Dendritic cell treated with granulocyte-macrophage colony-stimulating factor and Interleukin-4, amounts not matched to agents 40 ng/mL and 50 ng/mL, for 4 days (primary cell): ENCODE measurements at regions of chr2 and their contacts with region 1.

Region 1: DNA sequence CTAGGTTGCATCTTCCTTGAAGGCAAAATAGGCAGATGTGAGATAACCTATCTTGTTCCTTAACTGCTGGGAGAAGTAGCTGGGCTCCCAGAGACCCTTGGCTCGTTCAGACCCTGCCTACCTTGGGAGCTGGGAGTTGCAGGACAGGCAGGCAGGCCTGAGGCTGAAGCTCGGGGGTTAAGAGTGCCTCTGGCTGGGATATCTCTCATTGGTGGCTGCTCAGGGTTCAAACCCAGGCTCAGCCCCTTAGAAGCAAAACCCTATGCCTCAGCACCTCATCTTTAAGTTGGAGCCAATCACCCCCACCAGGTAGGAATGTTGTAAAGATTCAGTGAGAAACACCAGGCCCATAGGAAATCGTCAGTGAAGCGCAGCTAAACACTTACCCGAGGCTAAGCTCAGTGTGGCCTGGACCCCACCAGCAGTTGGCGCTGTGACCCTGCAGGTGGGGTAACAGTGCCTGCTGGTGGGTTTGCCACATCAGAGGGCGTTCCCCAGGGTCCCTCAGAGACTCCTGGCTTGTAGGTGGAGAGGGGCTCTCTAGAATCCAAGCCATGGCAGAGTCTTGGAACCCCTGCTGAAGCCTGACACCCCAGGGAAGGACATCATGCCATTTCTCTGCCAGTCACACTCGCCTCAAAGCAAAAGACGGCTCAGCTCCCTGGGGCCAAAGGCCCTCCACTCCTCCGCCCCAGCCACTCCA is 54.6 kb upstream of the GPR17 start:
- H3K4me3 Mint-ChIP-seq: no peak overlapping the region
- H3K27ac Mint-ChIP-seq: no peak overlapping the region
- H3K4me1 Mint-ChIP-seq: peaks cover 6% of the 10 kb centered on the region
- H3K27me3 Mint-ChIP-seq: no peaks in the 10 kb centered on the region

Region 2: DNA sequence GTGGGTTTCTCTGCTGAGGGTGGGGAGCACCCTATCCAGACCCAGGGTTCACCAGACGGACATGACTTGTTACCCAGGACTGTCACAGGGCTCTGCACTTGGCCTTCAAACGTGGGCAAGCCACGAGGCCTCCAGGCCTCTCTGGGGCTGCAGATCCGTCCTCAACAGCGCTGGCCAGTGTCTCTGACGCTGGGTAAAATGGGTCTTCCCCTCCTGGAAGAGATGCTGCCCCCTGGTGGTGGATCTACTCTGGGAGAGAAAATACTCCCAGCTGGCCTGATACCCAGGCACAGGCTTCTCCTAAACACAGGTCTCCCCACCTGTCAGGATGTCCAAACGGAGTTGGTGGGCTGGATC is 58.3 kb after region 1 on chr2:
- intact Hi-C with region 1: loop called (anchors 1 kb)
- H3K4me3 Mint-ChIP-seq: no peak overlapping the region
- H3K27ac Mint-ChIP-seq: peak overlapping the region; percentile 21
- H3K4me1 Mint-ChIP-seq: peaks cover 40% of the 10 kb centered on the region
- H3K27me3 Mint-ChIP-seq: peaks cover 8% of the 10 kb centered on the region